Gastrocnemius medialis (tissue), 4 donors: ENCODE measurements at regions of chr12 and their contacts with region 1.

Region 1: DNA sequence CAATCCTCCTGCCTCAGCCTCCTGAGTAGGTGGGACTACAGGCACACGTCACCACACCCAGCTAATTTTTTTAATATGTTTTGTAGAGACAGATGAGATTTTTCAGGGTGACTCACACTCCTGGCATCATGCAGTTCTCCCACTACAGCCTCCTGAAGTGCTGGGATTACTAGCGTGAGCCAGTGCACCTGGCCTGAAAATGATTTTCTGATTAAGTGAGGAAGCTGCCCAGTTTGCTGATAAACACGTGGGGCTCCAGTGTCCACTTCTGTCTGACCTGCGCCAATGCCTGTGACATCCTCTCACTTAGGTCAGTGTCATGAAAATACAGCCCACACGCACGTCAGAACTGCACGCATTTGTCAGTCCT is 37.0 kb upstream of the SFSWAP start:
- DNase-seq: no peak
- ATAC-seq: no peak
- H3K4me3 ChIP-seq: no peak overlapping the region
- H3K27ac ChIP-seq: no peak overlapping the region
- H3K4me1 ChIP-seq: no peaks in the 10 kb centered on the region
- H3K27me3 ChIP-seq: peaks cover 4 to 18% (median 7%) of the 10 kb centered on the region in 3 donors
- CTCF ChIP-seq: no peak
- POLR2A ChIP-seq: no peak

Region 2: DNA sequence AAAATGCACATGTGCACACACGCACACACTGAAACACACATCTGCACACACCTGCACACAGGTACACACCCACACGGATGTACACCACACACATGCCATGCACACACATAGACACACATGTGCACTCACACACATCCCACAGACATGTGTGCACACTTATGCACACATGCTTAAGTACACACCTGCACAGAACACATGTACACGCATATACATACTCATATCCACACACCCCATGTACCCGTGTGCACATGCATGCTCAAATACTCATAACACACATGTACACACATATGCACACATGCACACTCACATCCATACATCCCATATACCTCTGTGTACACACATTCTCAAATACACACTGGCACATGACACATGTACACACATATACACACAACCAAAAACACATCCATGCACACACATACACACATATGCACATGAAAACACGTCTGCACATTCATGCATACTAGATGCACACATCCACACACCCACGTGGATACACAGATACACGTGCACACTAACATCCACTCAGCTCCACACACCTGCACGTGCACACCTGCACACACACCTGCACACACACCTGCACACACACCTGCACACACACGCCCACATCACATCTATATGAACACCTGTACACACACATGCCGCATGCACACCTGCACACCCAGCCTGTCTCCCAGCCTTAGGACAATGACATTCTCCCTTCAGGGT is 383.5 kb before region 1 on chr12:
- in situ Hi-C with region 1: no loop called
- intact Hi-C with region 1: loop called (anchors 10 kb)
- DNase-seq: no peak
- ATAC-seq: no peak
- H3K4me3 ChIP-seq: no peak overlapping the region
- H3K27ac ChIP-seq: no peak overlapping the region
- H3K4me1 ChIP-seq: no peaks in the 10 kb centered on the region
- H3K27me3 ChIP-seq: no peaks in the 10 kb centered on the region
- CTCF ChIP-seq: no peak
- POLR2A ChIP-seq: no peak